AG04449 (cell line): ENCODE measurements at regions of chr17 and their contacts with region 1.

Region 1: DNA sequence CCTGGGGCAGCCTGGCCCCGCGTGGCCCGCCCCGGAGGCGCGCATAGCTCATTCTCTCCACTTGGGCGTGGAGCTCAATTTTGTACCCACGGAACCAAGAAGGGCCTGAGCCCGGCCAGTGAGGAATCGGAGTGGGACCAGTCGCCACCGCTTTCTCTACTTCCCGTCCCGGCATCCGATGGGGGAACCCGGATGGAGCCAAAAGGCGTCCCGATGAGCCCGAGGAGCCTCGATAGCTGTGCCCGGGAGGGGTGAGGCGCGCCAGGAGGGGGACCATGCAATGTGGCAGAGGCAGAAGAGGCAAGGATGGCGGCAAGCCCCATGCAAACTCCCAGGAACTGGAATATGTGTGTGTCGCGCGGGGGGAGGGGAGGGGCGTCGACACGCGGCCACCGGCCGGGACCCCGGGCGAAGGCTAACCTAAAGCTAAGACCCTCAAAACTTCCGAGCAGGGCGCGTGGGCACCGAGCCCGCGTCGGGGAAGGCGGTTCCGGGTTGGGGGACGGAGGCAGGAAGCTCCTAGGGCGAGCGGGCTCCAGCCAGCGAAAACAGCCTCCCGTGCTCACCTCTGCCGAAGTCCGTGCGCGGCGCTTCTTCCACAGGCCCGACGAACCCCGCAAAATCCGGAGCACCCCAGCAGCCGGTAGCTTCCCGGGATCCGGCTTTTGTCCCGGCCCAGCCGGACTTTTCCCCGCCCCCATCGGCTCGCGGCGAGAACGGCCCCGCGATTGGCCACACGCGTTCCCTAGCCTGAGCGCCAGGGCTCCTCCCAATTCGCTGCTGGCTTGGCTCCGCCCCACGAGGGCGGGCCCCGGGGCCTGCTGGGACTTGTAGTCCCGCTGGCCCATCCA is at the start of gene ACLY:
- DNase-seq: peak; percentile 65
- H3K4me3 ChIP-seq: peak within 1 kb of the TSS; percentile 89
- CTCF ChIP-seq: no peak

Region 2: GRCh38 chr17:41888332-41888965 is 30.1 kb before region 1 on chr17:
- CTCF ChIA-PET with region 1: no interaction called
- POLR2A ChIA-PET with region 1: no interaction called
- DNase-seq: no peak
- H3K4me3 ChIP-seq: no peak overlapping the region
- CTCF ChIP-seq: no peak

Region 3: DNA sequence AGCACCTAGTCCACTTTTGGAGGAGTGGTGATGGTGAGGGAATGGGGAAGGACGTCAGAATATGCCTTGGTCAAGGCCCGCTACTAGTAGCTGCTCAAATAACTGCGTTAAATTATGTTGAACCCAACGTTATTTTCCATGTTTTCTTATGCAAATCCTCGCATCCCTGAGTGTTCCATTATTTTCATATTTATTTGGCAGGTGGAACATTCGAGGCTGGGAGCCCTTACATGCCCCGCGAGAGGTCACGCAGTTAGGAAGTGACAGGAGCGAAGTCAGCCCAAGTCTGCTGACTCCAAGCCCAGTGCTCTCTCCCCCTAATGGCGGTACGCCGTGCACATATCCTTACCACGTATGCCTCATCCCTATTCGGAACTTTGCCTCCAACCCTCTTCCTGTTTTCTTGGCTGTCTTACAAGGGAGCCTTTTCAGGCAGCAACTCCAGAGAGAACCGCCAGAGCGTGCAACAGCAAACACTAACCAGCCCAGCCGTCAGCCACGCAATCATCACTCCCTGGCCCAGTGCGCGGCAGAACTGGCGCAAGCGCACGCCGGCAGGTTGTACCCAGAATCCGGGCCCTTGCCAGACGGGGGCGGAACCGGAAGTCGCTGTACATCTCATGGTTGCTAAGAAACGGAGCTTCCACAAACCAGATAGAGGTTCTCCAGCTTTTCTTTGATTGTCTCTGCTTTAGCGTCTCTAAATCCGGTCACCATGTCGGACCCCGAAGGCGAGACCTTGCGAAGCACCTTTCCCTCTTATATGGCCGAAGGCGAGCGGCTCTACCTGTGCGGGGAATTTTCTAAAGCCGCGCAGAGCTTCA is 11.7 kb after region 1 on chr17 and contains the start of gene ODAD4:
- CTCF ChIA-PET with region 1: interaction called, 33 read pairs
- POLR2A ChIA-PET with region 1: interaction called, 11 read pairs
- DNase-seq: peak; percentile 73
- H3K4me3 ChIP-seq: peak within 1 kb of the TSS; percentile 72
- CTCF ChIP-seq: peak; percentile 52

Region 4: GRCh38 chr17:42193969-42194899 is 275.7 kb after region 1 on chr17 and contains the start of gene GHDC:
- CTCF ChIA-PET with region 1: no interaction called
- POLR2A ChIA-PET with region 1: no interaction called
- DNase-seq: peak; percentile 10
- H3K4me3 ChIP-seq: peak within 1 kb of the TSS; percentile 81
- CTCF ChIP-seq: no peak